PC-3 (cell line): ENCODE measurements at regions of chr2 and their contacts with region 1.

Region 1: DNA sequence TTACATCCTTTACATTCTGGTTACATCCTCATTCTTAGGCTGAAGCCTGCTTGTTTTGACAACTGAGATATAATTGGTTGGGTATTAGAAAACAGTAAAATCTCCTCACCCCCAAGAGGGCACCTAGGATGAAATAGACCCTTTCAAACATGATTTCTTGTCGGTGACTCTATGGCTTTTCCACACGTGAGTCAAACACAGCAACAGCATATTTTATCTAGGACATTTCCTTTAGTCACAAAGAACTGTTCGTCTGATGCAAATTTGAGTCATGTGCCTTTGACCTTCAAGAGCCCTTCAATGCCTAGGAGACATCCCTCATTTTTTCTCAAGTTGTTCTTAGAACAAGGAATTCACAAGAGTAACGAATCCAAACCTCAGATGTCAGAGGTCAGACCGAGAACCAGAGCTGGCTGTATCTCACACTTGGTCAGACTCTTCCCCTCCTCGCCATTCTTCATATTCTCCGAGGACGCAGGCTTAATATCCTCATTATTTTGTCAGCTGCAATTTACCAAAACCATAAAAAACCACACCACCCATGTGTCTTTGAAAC is 60.5 kb upstream of the ALKAL2 start:
- DNase-seq: no peak
- ATAC-seq: no peak
- H3K4me3 ChIP-seq: no peak overlapping the region
- H3K27ac ChIP-seq: no peak overlapping the region
- H3K4me1 ChIP-seq: no peaks in the 10 kb centered on the region
- H3K27me3 ChIP-seq: peaks cover 63% of the 10 kb centered on the region
- CTCF ChIP-seq: no peak

Region 2: DNA sequence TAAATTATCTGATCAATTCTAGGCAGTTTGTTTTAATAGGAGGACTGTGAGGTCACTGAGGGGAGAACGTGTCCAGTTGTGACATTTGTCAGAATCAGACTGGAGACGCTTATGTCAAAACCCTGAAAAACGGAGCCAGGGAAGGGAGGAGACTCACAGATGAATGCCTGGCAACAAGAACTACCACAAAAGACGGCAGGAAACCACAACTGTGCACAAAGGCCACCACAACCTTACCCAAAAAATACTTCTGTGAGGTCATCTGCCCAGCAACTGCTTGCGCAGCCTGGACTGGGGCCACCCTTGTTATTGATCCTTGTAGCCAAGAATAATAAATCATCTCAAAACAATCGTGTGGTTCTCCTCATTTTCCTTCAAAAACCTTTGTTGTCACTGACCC is 112.4 kb after region 1 on chr2:
- CTCF ChIA-PET with region 1: no interaction called
- POLR2A ChIA-PET with region 1: no interaction called
- intact Hi-C with region 1: loop called (anchors 5 kb)
- DNase-seq: peak; percentile 65
- ATAC-seq: peak; percentile 33
- H3K4me3 ChIP-seq: no peak overlapping the region
- H3K27ac ChIP-seq: no peak overlapping the region
- H3K4me1 ChIP-seq: peaks cover 7% of the 10 kb centered on the region; the same call in 1 of the 2 replicates
- H3K27me3 ChIP-seq: peaks cover 61% of the 10 kb centered on the region
- CTCF ChIP-seq: no peak

Region 3: GRCh38 chr2:529425-529824 is 181.0 kb after region 1 on chr2:
- CTCF ChIA-PET with region 1: no interaction called
- POLR2A ChIA-PET with region 1: no interaction called
- intact Hi-C with region 1: no loop called
- DNase-seq: peak; percentile 77
- ATAC-seq: peak; percentile 60
- H3K4me3 ChIP-seq: no peak overlapping the region
- H3K27ac ChIP-seq: no peak overlapping the region
- H3K4me1 ChIP-seq: 0 out of 2 replicates have a peak, but pooled peaks cover 3% of the 10 kb centered on the region
- H3K27me3 ChIP-seq: no peaks in the 10 kb centered on the region
- CTCF ChIP-seq: peak; percentile 67